ENCODE measurements at regions of chrX and their contacts with region 1.

Region 1: GRCh38 chrX:17744896-17745523 is 7.7 kb downstream of the SCML1 start:
- DNase-seq: peak in 4 of 9 donors; percentile 27 to 32 (median 28)
- ATAC-seq: peak; percentile 34
- H3K4me3 ChIP-seq: no peak overlapping the region
- H3K4me3 Mint-ChIP-seq: no peak overlapping the region
- H3K27ac ChIP-seq: no peak overlapping the region
- H3K27ac Mint-ChIP-seq: no peak overlapping the region
- H3K4me1 ChIP-seq: peaks cover 0 to 9% of the 10 kb centered on the region in 2 donors
- H3K4me1 Mint-ChIP-seq: peaks cover 3 to 66% (median 46%) of the 10 kb centered on the region in 7 donors
- H3K27me3 ChIP-seq: no peaks in the 10 kb centered on the region
- H3K27me3 Mint-ChIP-seq: peaks cover 0 to 29% (median 0%) of the 10 kb centered on the region in 5 donors

Region 2: DNA sequence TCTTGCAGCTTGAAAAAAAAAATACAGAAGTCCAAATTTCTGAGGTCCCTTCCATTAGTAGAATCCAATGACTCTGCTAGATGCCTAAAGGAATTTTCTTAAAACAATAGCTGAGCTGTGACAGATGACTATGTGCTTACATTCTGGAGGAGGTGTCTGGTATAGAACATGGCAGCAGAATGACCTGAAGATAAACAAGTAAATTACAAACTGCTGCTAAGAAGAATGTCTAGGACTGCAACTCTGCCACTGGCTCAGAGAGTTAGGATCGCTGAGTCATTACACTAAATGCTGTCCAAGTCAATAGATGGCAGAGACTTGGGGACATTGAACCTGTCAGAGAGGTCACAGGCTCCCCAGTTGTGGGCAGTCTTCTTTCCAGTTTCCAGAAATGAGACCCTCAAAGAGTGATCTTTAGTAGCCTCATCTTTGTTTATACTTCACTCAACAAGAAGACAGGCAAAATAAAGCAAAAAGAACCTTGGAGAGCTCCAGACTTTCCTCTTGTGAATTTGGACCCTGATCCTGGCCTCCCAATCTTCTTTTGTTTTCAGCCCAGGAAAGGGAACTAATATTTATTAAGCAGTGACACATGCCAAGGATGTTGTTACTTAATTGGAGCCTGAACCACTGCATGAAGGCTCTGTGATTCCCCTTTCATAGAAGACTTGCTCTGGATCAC is 64.1 kb before region 1 on chrX:
- CTCF ChIA-PET with region 1: no interaction called
- POLR2A ChIA-PET with region 1: no interaction called
- intact Hi-C with region 1: no loop called
- DNase-seq: no peak
- ATAC-seq: no peak
- H3K4me3 ChIP-seq: no peak overlapping the region
- H3K4me3 Mint-ChIP-seq: no peak overlapping the region
- H3K27ac ChIP-seq: no peak overlapping the region
- H3K27ac Mint-ChIP-seq: no peak overlapping the region
- H3K4me1 ChIP-seq: no peaks in the 10 kb centered on the region
- H3K4me1 Mint-ChIP-seq: peaks cover 0 to 22% (median 14%) of the 10 kb centered on the region in 7 donors
- H3K27me3 ChIP-seq: no peaks in the 10 kb centered on the region
- H3K27me3 Mint-ChIP-seq: no peaks in the 10 kb centered on the region

Region 3: DNA sequence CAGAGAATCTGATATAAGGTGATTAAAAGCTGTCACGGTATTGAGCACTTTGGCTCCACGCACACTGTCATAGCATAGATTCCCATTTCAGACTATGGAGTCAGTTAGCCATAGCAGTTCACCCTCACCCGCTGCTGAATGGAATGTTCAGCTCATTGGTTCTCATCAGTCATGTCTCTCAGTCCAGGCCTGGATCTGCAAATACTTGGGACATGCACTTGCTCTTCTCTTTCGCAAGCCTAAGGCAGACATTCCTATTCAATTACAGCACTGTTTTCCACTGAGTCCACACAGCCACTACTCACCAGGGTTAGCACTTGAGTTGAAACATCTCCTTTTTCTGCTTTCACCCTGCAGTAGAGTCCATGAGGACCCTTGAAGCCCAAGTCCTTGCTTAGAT is 38.3 kb before region 1 on chrX:
- CTCF ChIA-PET with region 1: no interaction called
- POLR2A ChIA-PET with region 1: no interaction called
- intact Hi-C with region 1: no loop called
- DNase-seq: no peak
- ATAC-seq: no peak
- H3K4me3 ChIP-seq: no peak overlapping the region
- H3K4me3 Mint-ChIP-seq: no peak overlapping the region
- H3K27ac ChIP-seq: no peak overlapping the region
- H3K27ac Mint-ChIP-seq: peak overlapping the region in 1 of 9 donors; percentile 37
- H3K4me1 ChIP-seq: no peaks in the 10 kb centered on the region
- H3K4me1 Mint-ChIP-seq: no peaks in the 10 kb centered on the region
- H3K27me3 ChIP-seq: no peaks in the 10 kb centered on the region
- H3K27me3 Mint-ChIP-seq: no peaks in the 10 kb centered on the region

Region 4: DNA sequence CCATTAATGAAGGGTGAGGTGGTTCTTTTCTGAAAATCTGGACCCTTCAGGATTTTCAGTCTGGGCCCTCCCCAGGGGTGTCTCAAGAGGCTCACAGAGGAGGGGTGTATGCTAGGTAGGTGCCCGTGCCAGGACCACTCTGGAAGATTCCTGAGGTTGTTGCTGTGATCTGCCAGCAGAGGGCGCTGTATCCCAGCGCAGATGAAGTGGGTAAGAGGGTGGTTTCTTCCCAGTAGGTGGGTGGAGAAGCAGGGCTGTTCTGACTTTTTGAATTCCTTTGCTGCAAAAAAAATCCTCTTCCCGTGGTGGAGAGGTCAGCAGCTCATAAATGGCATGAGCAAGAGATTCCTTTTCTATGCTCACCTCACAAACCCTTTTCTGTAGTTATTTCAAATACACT is 43.4 kb after region 1 on chrX:
- CTCF ChIA-PET with region 1: no interaction called
- POLR2A ChIA-PET with region 1: no interaction called
- intact Hi-C with region 1: loop called in 1 of 2 experiments (anchors 2 kb)
- DNase-seq: peak; percentile 14 to 58 (median 32)
- ATAC-seq: peak; percentile 79
- H3K4me3 ChIP-seq: no peak overlapping the region
- H3K4me3 Mint-ChIP-seq: peak overlapping the region in 4 of 10 donors; percentile 17 to 25 (median 22)
- H3K27ac ChIP-seq: no peak overlapping the region
- H3K27ac Mint-ChIP-seq: peak overlapping the region in 3 of 9 donors; percentile 38 to 75 (median 65)
- H3K4me1 ChIP-seq: peaks cover 0 to 7% of the 10 kb centered on the region in 2 donors
- H3K4me1 Mint-ChIP-seq: peaks cover 5 to 25% (median 19%) of the 10 kb centered on the region in 7 donors
- H3K27me3 ChIP-seq: no peaks in the 10 kb centered on the region
- H3K27me3 Mint-ChIP-seq: peaks cover 0 to 4% (median 0%) of the 10 kb centered on the region in 5 donors

Region 5: DNA sequence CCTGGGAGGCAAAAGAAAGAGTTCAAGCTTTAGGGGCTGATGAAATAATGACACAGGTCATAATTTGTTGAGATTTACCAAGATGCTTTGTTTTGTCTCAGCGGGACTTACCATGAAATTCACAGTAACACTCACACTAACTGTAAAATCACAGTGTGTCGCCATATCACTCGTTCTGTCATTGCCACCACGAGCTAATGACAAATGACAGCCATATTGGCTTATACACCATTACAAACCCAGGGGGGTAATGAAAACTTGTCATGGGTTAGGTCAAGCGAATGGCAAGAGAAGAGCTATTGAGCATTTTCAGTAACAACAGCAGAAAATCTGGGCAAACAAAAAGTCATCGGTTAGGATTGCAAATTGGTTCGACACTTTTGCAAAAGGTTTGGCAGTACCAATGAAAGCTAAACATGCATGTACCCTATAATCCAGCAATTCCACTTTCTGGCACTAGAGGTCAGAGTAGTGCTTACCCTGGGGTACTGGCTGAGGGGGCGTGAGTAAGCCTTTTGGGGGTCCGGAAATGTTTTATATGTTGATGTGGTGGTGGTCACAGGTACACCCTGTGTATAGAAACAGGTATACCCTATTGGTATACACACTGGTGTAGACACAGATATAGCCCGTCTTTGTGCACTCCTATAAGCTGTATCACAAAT is 200.0 kb after region 1 on chrX:
- CTCF ChIA-PET with region 1: interaction called, 4 read pairs
- POLR2A ChIA-PET with region 1: no interaction called
- intact Hi-C with region 1: loop called in 1 of 2 experiments (anchors 1 kb)
- DNase-seq: peak in 6 of 9 donors; percentile 10 to 27 (median 22)
- ATAC-seq: peak; percentile 41
- H3K4me3 ChIP-seq: no peak overlapping the region
- H3K4me3 Mint-ChIP-seq: no peak overlapping the region
- H3K27ac ChIP-seq: no peak overlapping the region
- H3K27ac Mint-ChIP-seq: no peak overlapping the region
- H3K4me1 ChIP-seq: no peaks in the 10 kb centered on the region
- H3K4me1 Mint-ChIP-seq: no peaks in the 10 kb centered on the region
- H3K27me3 ChIP-seq: no peaks in the 10 kb centered on the region
- H3K27me3 Mint-ChIP-seq: peaks cover 0 to 7% (median 0%) of the 10 kb centered on the region in 5 donors

Region 6: DNA sequence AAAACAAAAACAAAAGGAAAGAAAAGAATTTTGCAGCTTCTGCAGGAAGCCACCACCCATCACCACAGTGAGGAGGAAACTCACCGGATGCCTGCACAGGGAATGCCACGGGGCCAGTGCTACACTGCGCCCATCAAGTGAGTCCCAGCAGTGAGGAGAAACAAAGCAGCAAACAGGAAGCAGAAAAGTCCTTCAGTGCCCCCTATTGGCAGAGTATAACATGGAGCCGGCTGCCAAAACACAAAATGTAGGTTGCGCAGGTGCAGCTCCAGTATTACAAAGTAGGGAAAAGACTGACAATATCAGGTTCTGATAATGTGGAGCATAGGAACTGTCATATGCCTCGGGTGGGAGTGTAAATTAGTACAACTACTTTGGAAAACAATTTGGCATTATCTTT is 632.8 kb after region 1 on chrX:
- CTCF ChIA-PET with region 1: interaction called, 5 read pairs
- POLR2A ChIA-PET with region 1: interaction called, 3 read pairs
- intact Hi-C with region 1: loop called (anchors 2 to 5 kb)
- DNase-seq: peak in 6 of 9 donors; percentile 21 to 39 (median 24)
- ATAC-seq: peak; percentile 74
- H3K4me3 ChIP-seq: no peak overlapping the region
- H3K4me3 Mint-ChIP-seq: peak overlapping the region in 3 of 10 donors; percentile 20 to 37 (median 26)
- H3K27ac ChIP-seq: no peak overlapping the region
- H3K27ac Mint-ChIP-seq: peak overlapping the region in 5 of 9 donors; percentile 58 to 83 (median 62)
- H3K4me1 ChIP-seq: no peaks in the 10 kb centered on the region
- H3K4me1 Mint-ChIP-seq: peaks cover 0 to 6% (median 5%) of the 10 kb centered on the region in 7 donors
- H3K27me3 ChIP-seq: no peaks in the 10 kb centered on the region
- H3K27me3 Mint-ChIP-seq: no peaks in the 10 kb centered on the region